Activated CD8-positive, alpha-beta T cell treated with anti-CD3 and anti-CD28 coated beads for 36 hours (primary cell): ENCODE measurements at regions of chr20 and their contacts with region 1.

Region 1: GRCh38 chr20:47379433-47380150 is 23.1 kb upstream of the ZMYND8 start:
- DNase-seq: no peak
- ATAC-seq: no peak
- H3K4me3 Mint-ChIP-seq: no peak overlapping the region
- H3K27ac Mint-ChIP-seq: peak overlapping the region; percentile 18
- H3K4me1 Mint-ChIP-seq: peaks cover 27% of the 10 kb centered on the region
- H3K27me3 Mint-ChIP-seq: no peaks in the 10 kb centered on the region
- CTCF ChIP-seq: no peak

Region 2: DNA sequence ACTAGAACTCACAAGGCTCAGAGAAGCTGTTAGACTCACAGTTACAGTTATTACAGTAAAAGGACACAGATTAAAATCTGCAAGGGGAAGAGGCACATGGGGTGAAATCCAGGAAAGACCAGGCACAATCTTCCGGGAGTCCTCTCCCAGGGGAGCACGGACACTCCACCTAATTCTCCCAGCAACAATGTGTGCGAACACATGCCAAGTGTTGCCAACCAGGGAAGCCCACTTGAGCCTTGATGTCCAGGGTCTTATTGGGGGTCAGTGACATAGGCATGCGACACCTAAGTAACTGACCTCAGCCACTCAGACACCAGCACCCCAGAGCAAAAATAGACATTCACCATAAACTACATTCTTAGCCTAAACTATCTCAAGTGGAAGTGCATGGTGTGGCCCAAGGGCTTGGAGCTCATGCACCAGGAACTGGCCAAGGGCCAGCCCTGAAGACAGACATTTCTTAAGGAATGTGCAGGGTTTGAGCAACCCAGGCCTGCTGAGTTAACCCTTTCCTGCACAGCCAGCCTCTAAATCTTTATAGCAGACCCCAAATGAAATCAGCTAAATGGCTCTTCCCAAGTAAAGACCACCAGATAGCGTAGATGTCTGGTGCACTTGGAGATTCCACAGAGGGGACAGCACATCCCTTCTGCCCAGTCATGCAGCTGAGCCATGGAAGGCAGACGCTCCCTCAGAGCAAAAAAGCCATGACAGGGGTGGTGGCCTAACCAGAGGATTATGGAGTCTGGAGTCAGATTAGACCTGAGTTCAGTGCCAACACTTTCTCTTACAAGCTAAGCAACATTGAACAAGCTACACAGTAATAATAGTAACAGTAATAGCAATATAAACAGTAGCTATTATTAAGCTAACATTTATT is 245.8 kb before region 1 on chr20:
- CTCF ChIA-PET with region 1: no interaction called
- POLR2A ChIA-PET with region 1: no interaction called
- intact Hi-C with region 1: no loop called
- DNase-seq: no peak
- ATAC-seq: no peak
- H3K4me3 Mint-ChIP-seq: no peak overlapping the region
- H3K27ac Mint-ChIP-seq: no peak overlapping the region
- H3K4me1 Mint-ChIP-seq: no peaks in the 10 kb centered on the region
- H3K27me3 Mint-ChIP-seq: peaks cover 10% of the 10 kb centered on the region
- CTCF ChIP-seq: no peak

Region 3: DNA sequence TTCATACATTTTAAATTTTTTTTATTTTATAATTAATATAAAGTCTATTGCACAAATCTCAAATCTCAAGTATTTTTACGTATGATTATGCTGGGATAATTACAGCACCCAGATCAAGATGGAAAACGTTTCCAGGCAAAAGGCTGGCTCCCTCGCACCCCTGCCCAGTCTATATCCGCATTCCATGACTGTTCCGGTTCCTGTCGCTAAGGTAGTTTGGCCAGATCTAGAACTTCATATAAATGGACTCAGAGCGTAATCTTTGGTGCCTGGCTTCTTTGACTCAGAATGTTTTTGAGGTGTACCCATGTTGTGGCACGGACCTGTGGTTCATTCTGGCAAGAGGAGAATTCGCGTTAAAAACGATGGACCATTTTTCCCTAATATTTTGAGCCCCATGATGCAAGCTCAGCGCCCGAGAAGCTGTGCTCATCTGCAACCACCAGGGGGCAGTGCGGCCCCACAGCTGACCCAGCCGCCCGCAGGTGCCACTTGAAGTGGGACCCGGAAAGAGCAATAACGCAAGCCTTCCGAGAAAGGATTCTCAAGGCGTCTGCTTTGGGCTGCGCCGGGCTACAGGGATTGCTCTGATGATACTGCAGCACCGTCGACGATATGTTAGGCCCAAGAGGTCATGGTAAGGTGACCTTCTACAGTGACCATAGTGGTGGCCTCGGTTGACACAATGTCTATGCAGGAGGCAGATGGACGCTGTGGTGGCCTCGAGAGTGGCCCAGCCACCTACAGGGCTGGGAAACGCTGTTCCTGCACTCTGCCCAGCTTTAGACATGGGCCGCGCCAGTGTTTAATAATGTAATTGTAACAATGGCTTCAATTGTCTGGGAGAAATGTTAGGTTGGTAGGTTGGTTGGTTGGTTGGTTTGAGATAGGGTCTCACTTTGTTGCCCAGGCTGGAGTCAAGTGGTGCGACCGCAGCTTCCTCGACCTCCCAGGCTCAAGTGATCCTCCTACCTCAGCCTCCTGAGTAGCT is 183.2 kb before region 1 on chr20:
- CTCF ChIA-PET with region 1: interaction called, 192 read pairs
- POLR2A ChIA-PET with region 1: no interaction called
- intact Hi-C with region 1: loop called (anchors 5 kb)
- DNase-seq: peak; percentile 85
- ATAC-seq: peak; percentile 77
- H3K4me3 Mint-ChIP-seq: no peak overlapping the region
- H3K27ac Mint-ChIP-seq: no peak overlapping the region
- H3K4me1 Mint-ChIP-seq: peaks cover 14% of the 10 kb centered on the region
- H3K27me3 Mint-ChIP-seq: peaks cover 4% of the 10 kb centered on the region
- CTCF ChIP-seq: peak; percentile 91

Region 4: DNA sequence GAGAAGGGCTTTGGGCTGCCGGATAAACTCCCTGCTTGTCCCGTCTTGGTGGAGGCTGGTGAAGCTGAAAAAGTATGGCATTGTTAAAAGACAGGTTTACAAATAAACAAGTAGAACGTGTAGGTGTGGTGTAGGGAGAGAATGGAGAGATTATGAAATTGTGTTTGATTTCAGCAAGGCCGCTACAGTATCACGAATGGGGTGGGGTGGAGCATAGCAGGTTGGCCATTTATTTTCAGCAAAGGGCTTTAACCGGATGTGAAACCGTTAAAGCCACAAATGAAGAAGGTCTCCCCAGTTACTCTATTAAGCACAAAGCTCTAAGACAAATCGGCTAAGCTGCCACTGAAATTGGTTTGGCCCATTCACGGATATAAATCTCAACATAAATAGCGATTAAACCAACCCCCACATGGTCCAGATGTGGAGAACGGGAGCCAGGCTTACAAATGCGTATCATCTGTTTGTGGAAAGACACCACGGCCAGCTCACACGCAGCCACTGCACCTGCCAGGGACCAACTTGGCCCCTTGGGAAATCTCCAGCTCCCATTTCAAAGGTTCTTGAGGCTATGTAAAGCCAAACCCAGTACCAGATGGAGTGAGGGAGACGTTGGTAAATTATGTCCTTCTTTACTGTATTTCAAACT is 117.1 kb before region 1 on chr20:
- CTCF ChIA-PET with region 1: interaction called, 28 read pairs
- POLR2A ChIA-PET with region 1: no interaction called
- intact Hi-C with region 1: no loop called
- DNase-seq: no peak
- ATAC-seq: no peak
- H3K4me3 Mint-ChIP-seq: no peak overlapping the region
- H3K27ac Mint-ChIP-seq: no peak overlapping the region
- H3K4me1 Mint-ChIP-seq: peaks cover 39% of the 10 kb centered on the region
- H3K27me3 Mint-ChIP-seq: no peaks in the 10 kb centered on the region
- CTCF ChIP-seq: no peak

Region 5: GRCh38 chr20:47309909-47310308 is 69.7 kb before region 1 on chr20:
- CTCF ChIA-PET with region 1: interaction called, 11 read pairs
- POLR2A ChIA-PET with region 1: no interaction called
- intact Hi-C with region 1: no loop called
- DNase-seq: no peak
- ATAC-seq: no peak
- H3K4me3 Mint-ChIP-seq: no peak overlapping the region
- H3K27ac Mint-ChIP-seq: peak overlapping the region; percentile 34
- H3K4me1 Mint-ChIP-seq: peaks cover 30% of the 10 kb centered on the region
- H3K27me3 Mint-ChIP-seq: no peaks in the 10 kb centered on the region
- CTCF ChIP-seq: no peak

Region 6: DNA sequence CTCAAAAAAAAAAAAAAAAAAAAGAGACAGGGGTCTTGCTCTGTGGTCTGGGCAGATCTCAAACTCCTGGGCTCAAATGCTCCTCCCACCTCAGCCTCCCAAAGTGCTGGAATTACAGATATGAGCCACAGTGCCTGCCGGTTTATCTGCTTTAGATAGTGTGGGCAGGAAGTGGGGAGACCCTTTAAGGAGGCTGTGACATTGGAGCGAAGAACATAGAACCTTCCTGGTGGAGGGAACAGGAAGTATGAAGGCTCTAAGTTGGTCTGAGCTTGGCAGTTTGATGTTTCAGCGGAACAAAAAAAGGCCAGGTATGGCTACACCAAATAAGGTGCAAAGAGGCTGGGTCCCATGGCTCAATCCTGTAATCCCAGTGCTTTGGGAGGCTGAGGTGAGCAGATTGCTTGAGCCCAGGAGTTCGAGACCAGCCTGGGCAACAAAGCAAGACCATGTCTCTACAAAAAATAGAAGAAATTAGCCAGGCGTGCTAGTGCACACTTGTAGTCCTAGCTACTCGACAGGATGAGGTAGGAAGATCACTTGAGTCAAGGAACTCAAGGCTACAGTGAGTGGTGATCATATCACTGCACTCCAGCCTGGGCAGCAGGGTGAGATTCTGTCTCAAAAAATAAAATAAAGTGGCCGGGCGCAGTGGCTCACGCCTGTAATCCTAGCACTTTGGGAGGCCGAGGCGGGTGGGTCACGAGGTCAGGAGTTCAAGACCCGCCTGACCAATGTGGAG is 14.4 kb before region 1 on chr20:
- CTCF ChIA-PET with region 1: interaction called, 151 read pairs
- POLR2A ChIA-PET with region 1: interaction called, 3 read pairs
- intact Hi-C with region 1: no loop called
- DNase-seq: no peak
- ATAC-seq: peak; percentile 51
- H3K4me3 Mint-ChIP-seq: no peak overlapping the region
- H3K27ac Mint-ChIP-seq: peak overlapping the region; percentile 46
- H3K4me1 Mint-ChIP-seq: peaks cover 15% of the 10 kb centered on the region
- H3K27me3 Mint-ChIP-seq: no peaks in the 10 kb centered on the region
- CTCF ChIP-seq: no peak

Region 7: DNA sequence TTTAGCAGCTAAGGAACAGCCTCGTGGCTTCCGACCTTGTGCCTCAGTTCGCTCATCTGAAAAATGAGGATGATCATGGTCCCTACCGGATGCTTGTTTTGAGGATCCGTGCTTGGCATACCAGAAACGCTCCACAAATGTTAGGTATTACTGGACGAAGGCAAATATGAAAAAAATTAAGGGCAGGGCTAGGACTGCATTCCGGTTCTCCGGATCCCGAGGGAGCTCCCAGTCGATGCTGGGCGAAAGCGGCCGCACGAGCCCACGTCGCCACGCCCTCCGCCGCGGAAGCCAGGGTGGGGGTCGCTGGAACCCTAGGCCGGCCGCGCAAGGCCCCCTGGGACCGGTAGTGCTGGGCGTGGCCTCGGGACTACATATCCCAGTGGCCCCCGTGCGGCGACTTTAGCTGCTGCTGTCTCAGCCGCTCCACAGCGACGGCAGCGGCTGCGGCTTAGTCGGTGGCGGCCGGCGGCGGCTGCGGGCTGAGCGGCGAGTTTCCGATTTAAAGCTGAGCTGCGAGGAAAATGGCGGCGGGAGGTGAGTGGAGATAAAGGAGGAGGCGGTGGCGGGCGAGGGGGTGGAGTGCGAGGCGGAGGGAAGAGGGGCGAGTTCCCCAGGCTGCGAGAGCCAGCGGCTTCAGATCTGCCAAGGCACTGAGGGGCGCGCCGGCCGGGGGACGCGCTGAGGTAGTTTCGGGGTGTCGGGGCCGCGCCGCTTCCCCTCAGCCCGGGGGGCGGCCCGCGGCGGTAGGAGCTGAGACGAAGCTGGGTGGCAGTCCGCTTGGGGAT is 122.1 kb after region 1 on chr20 and contains the start of gene NCOA3:
- CTCF ChIA-PET with region 1: interaction called, 44 read pairs
- POLR2A ChIA-PET with region 1: no interaction called
- intact Hi-C with region 1: no loop called
- DNase-seq: peak; percentile 98
- ATAC-seq: peak; percentile 92
- H3K4me3 Mint-ChIP-seq: peak within 1 kb of the TSS; percentile 94
- H3K27ac Mint-ChIP-seq: peak within 1 kb of the TSS; percentile 87
- H3K4me1 Mint-ChIP-seq: peaks cover 42% of the 10 kb centered on the region
- H3K27me3 Mint-ChIP-seq: peaks cover 1% of the 10 kb centered on the region
- CTCF ChIP-seq: no peak
- total RNA-seq, gene NCOA3: 66.2 to 73.7 TPM